ENCODE measurements at regions of chr2 and their contacts with region 1.

Region 1: GRCh38 chr2:231463698-231464575 is at the start of gene NCL:
- DNase-seq: peak; percentile 95
- H3K4me3 Mint-ChIP-seq: peak within 1 kb of the TSS; percentile 93
- H3K27ac Mint-ChIP-seq: peak within 1 kb of the TSS; percentile 100
- H3K4me1 Mint-ChIP-seq: peaks cover 34% of the 10 kb centered on the region
- H3K27me3 Mint-ChIP-seq: no peaks in the 10 kb centered on the region
- total RNA-seq, gene NCL: 1,513 and 1,560 TPM in 2 replicates

Region 2: GRCh38 chr2:230908595-230909191 is 555.2 kb before region 1 on chr2:
- intact Hi-C with region 1: no loop called
- DNase-seq: peak; percentile 72
- H3K4me3 Mint-ChIP-seq: peak overlapping the region; percentile 46
- H3K27ac Mint-ChIP-seq: peak overlapping the region; percentile 87
- H3K4me1 Mint-ChIP-seq: peaks cover 40% of the 10 kb centered on the region
- H3K27me3 Mint-ChIP-seq: peaks cover 28% of the 10 kb centered on the region

Region 3: DNA sequence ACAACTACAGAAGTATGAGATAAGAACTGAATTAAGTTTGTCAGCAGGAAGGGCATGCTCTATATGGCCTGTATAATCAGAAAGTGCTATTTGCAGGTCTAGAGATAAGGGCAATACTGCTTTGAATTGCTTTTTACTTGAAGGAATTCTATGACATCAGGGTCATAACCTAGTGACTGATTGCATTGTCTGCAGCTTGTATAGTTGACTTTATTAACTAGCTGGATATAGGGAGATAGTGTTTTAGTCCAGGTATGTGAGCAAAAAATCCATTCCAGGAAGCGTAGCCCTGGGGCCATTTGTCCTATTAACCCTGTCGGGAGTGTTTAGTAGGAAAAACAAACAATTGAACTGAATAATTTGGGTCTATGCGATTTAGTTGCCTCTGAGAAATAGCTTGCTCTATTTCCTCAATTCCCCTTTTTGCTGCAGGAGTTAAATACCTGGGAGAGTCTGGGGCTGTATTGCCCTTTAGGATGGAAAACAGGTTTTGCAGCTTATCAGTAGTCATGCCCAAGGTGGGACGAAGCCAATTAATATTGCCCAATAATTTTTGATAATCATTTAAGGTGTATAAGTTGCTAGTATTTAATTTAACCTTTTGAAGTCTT is 369.1 kb before region 1 on chr2:
- intact Hi-C with region 1: no loop called
- DNase-seq: no peak
- H3K4me3 Mint-ChIP-seq: no peak overlapping the region
- H3K27ac Mint-ChIP-seq: no peak overlapping the region
- H3K4me1 Mint-ChIP-seq: no peaks in the 10 kb centered on the region
- H3K27me3 Mint-ChIP-seq: no peaks in the 10 kb centered on the region

Region 4: GRCh38 chr2:231452799-231453508 is 11.0 kb before region 1 on chr2:
- intact Hi-C with region 1: loop called (anchors 1 kb)
- DNase-seq: no peak
- H3K4me3 Mint-ChIP-seq: no peak overlapping the region
- H3K27ac Mint-ChIP-seq: peak overlapping the region; percentile 60
- H3K4me1 Mint-ChIP-seq: peaks cover 17% of the 10 kb centered on the region
- H3K27me3 Mint-ChIP-seq: no peaks in the 10 kb centered on the region

Region 5: DNA sequence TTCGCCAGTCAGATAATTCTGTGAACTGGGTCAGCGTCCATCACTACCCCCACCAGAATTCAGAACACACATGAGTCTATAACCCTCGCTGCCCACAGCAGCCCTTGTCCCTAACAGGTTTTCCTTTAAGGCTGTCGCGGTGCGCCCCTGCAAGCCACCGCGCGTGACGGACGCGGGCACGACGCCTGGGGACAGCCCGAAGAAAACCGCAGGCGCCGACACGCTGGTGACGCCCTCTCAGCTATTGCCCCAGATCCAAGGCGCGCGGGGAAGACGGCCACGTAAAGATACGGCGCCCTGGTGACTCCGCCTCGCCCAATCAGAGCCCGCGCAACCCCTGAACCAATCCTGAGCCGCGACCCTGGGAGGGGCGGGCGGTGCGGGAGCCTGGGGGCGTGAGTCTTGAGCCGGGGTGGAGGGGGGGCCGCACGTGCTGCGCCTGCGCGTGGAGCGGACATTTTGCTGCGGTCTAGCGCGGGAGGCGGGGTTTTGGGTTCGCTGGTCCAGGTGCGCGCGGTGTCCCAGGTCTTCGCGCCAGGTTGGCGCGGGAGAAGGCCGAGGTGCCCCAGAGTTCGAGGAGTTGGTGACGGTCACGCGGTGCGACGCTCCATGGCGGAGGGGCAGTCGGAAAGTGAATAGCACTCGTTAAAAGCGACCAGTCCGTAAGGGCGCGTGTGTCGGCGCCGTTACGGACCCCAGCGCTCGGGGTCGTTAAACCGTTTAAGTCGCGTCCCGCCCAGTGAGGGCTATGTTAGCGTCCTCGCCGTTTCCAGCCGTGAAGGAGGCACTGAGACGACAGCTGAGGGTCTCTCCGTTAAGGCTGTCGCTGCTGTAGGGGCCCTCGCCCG is 50.4 kb after region 1 on chr2:
- intact Hi-C with region 1: loop called (anchors 1 kb)
- DNase-seq: peak; percentile 99
- H3K4me3 Mint-ChIP-seq: peak overlapping the region; percentile 94
- H3K27ac Mint-ChIP-seq: peak overlapping the region; percentile 97
- H3K4me1 Mint-ChIP-seq: peaks cover 13% of the 10 kb centered on the region
- H3K27me3 Mint-ChIP-seq: peaks cover 6% of the 10 kb centered on the region

Region 6: GRCh38 chr2:231612179-231613053 is 148.5 kb after region 1 on chr2:
- intact Hi-C with region 1: loop called (anchors 2 kb)
- DNase-seq: peak; percentile 97
- H3K4me3 Mint-ChIP-seq: peak overlapping the region; percentile 86
- H3K27ac Mint-ChIP-seq: peak overlapping the region; percentile 98
- H3K4me1 Mint-ChIP-seq: peaks cover 43% of the 10 kb centered on the region
- H3K27me3 Mint-ChIP-seq: no peaks in the 10 kb centered on the region

Region 7: GRCh38 chr2:231706731-231707624 is 243.0 kb after region 1 on chr2:
- intact Hi-C with region 1: loop called (anchors 1 kb)
- DNase-seq: peak; percentile 99
- H3K4me3 Mint-ChIP-seq: peak overlapping the region; percentile 92
- H3K27ac Mint-ChIP-seq: peak overlapping the region; percentile 100
- H3K4me1 Mint-ChIP-seq: peaks cover 23% of the 10 kb centered on the region
- H3K27me3 Mint-ChIP-seq: peaks cover 1% of the 10 kb centered on the region

Measured in activated CD4-positive, alpha-beta T cell treated with anti-CD3 and anti-CD28 coated beads, Interleukin-2, amount 10 ng/mL, durations not matched to agents 24 days and 14 days (primary cell).